ENCODE measurements at regions of chr4 and their contacts with region 1.

Region 1: GRCh38 chr4:140153718-140154571 is at the start of gene MAML3:
- DNase-seq: peak; percentile 95
- H3K4me3 ChIP-seq: peak within 1 kb of the TSS; percentile 63 to 97 (median 65)
- H3K27ac ChIP-seq: peak within 1 kb of the TSS; percentile 53
- H3K4me1 ChIP-seq: peaks cover 17% of the 10 kb centered on the region
- H3K27me3 ChIP-seq: no peaks in the 10 kb centered on the region
- CTCF ChIP-seq: no peak
- total RNA-seq, gene MAML3: 0.45 to 2.8 TPM

Region 2: GRCh38 chr4:139887962-139888735 is 265.8 kb before region 1 on chr4:
- CTCF ChIA-PET with region 1: no interaction called
- dilution Hi-C with region 1: no loop called
- in situ Hi-C with region 1: no loop called
- intact Hi-C with region 1: loop called (anchors 5 kb)
- DNase-seq: peak; percentile 97
- H3K4me3 ChIP-seq: peak overlapping the region in 2 of 3 experiments; percentile 49 to 54
- H3K27ac ChIP-seq: peak overlapping the region; percentile 84
- H3K4me1 ChIP-seq: peaks cover 41% of the 10 kb centered on the region
- H3K27me3 ChIP-seq: no peaks in the 10 kb centered on the region
- CTCF ChIP-seq: no peak

Region 3: GRCh38 chr4:140059159-140059558 is 94.8 kb before region 1 on chr4:
- CTCF ChIA-PET with region 1: no interaction called
- dilution Hi-C with region 1: loop called (anchors 5 kb)
- in situ Hi-C with region 1: loop called in 1 of 2 experiments (anchors 5 kb)
- intact Hi-C with region 1: no loop called
- DNase-seq: peak; percentile 35
- H3K4me3 ChIP-seq: no peak overlapping the region
- H3K27ac ChIP-seq: no peak overlapping the region
- H3K4me1 ChIP-seq: no peaks in the 10 kb centered on the region
- H3K27me3 ChIP-seq: no peaks in the 10 kb centered on the region
- CTCF ChIP-seq: no peak

Region 4: DNA sequence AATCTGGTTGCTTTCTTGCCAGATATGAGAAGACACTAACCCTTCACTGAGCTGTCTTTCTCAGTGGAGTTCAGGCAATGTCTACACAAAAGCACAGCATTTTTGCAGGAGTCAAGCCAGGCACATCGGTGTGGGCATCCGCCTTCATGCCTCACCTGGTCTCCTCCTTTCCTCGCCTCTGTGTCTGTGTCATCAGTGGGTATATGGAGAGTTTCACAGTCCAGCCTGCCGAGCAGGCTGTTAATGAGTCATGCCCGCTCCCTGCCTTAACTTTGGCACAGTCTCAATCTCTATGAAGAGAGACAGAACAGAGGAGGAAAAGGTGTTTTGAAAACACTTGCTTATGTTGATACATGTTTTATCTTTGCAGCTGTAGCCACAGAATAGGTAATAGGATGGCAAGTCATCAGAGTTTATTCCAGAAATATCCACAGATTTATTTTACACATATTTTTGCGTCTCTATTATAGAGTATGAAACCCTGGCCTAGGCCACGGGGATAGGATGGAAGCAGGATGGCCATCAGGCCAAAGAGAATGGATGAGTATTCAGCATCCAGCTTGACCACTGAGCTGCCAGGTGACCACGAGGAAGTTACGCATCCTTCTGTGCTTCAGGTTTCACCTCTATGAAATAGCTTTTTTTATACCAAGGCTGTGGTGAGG is 32.8 kb after region 1 on chr4:
- CTCF ChIA-PET with region 1: no interaction called
- dilution Hi-C with region 1: no loop called
- in situ Hi-C with region 1: no loop called
- intact Hi-C with region 1: loop called (anchors 2 kb)
- DNase-seq: peak; percentile 94
- H3K4me3 ChIP-seq: no peak overlapping the region
- H3K27ac ChIP-seq: peak overlapping the region; percentile 57
- H3K4me1 ChIP-seq: peaks cover 29% of the 10 kb centered on the region
- H3K27me3 ChIP-seq: no peaks in the 10 kb centered on the region
- CTCF ChIP-seq: no peak

Region 5: GRCh38 chr4:140252742-140253555 is 99.0 kb after region 1 on chr4:
- CTCF ChIA-PET with region 1: no interaction called
- dilution Hi-C with region 1: no loop called
- in situ Hi-C with region 1: loop called in 1 of 2 experiments (anchors 10 kb)
- intact Hi-C with region 1: loop called (anchors 1 kb)
- DNase-seq: peak; percentile 58
- H3K4me3 ChIP-seq: peak overlapping the region; percentile 32 to 66 (median 52)
- H3K27ac ChIP-seq: no peak overlapping the region
- H3K4me1 ChIP-seq: peaks cover 17% of the 10 kb centered on the region
- H3K27me3 ChIP-seq: no peaks in the 10 kb centered on the region
- CTCF ChIP-seq: peak; percentile 60 to 84